WTC11 (cell line): ENCODE measurements at regions of chr5 and their contacts with region 1.

Region 1: GRCh38 chr5:141968914-141969608 is at the start of gene RNF14:
- DNase-seq: peak; percentile 95
- ATAC-seq: peak; percentile 96
- H3K4me3 Mint-ChIP-seq: peak within 1 kb of the TSS; percentile 80
- H3K27ac Mint-ChIP-seq: peak within 1 kb of the TSS; percentile 92
- H3K4me1 Mint-ChIP-seq: peaks cover 19% of the 10 kb centered on the region
- H3K27me3 Mint-ChIP-seq: no peaks in the 10 kb centered on the region
- CTCF ChIP-seq: peak; percentile 98
- total RNA-seq, gene RNF14: 17.0 to 22.6 TPM (median 20.5 TPM) in 3 replicates

Region 2: DNA sequence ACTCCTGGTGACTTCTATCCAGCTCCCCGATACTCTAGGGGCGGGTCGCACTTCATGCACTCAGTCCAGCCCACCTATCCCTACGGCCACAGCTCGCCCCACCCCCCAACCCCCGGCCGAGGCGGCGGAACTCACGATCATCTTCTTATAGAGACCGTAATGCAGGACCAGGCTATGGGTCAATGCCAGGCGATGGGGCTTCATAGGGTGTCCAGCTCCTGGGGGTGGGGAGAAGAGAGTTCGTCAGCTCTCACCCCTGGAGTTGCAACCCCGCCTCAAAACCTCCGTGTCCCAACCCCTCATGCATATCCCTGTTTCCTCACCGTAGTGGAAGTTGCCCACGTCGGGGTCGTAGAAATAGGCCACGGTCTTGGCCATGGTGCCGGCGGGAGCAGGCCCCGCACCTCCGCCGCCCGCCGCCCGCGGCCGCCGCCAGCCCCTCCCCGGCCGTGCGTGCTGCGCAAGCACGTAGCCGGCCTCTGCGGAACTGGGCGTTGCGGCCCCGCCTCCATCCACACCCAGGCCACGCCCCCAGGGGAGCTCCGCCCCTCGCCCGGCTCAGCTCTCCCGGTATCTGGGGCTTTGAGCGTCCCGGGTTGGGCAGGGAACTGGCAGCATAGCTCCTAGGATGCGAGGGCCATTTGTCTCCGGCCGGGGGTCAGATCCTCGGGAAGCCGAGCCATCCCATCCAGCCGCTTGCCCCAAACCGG is 332.5 kb before region 1 on chr5 and contains the starts of genes HDAC3 and RELL2:
- CTCF ChIA-PET with region 1: interaction called, 17 read pairs
- POLR2A ChIA-PET with region 1: no interaction called
- DNase-seq: peak; percentile 97
- ATAC-seq: peak; percentile 82
- H3K4me3 Mint-ChIP-seq: peak within 1 kb of the TSS; percentile 90
- H3K27ac Mint-ChIP-seq: peak within 1 kb of the TSS; percentile 90
- H3K4me1 Mint-ChIP-seq: peaks cover 22% of the 10 kb centered on the region
- H3K27me3 Mint-ChIP-seq: no peaks in the 10 kb centered on the region
- CTCF ChIP-seq: no peak
- total RNA-seq, gene HDAC3: 84.7 to 96.2 TPM (median 94.5 TPM) in 3 replicates
- total RNA-seq, gene RELL2: 19.3 to 23.8 TPM (median 21.4 TPM) in 3 replicates

Region 3: GRCh38 chr5:141672848-141673813 is 295.9 kb before region 1 on chr5:
- CTCF ChIA-PET with region 1: interaction called, 11 read pairs
- POLR2A ChIA-PET with region 1: no interaction called
- DNase-seq: no peak
- ATAC-seq: peak; percentile 2; the same call in 1 of the 2 replicates
- H3K4me3 Mint-ChIP-seq: no peak overlapping the region
- H3K27ac Mint-ChIP-seq: peak overlapping the region; percentile 42
- H3K4me1 Mint-ChIP-seq: peaks cover 32% of the 10 kb centered on the region
- H3K27me3 Mint-ChIP-seq: no peaks in the 10 kb centered on the region
- CTCF ChIP-seq: no peak

Region 4: GRCh38 chr5:141681695-141682641 is 287.1 kb before region 1 on chr5 and contains the start of gene ARAP3:
- CTCF ChIA-PET with region 1: interaction called, 11 read pairs
- POLR2A ChIA-PET with region 1: interaction called, 3 read pairs
- DNase-seq: peak; percentile 76
- ATAC-seq: peak; percentile 50
- H3K4me3 Mint-ChIP-seq: peak within 1 kb of the TSS; percentile 84
- H3K27ac Mint-ChIP-seq: peak within 1 kb of the TSS; percentile 96
- H3K4me1 Mint-ChIP-seq: peaks cover 50% of the 10 kb centered on the region
- H3K27me3 Mint-ChIP-seq: no peaks in the 10 kb centered on the region
- CTCF ChIP-seq: no peak
- total RNA-seq, gene ARAP3: 51.2 to 60.4 TPM (median 53.4 TPM) in 3 replicates

Region 5: DNA sequence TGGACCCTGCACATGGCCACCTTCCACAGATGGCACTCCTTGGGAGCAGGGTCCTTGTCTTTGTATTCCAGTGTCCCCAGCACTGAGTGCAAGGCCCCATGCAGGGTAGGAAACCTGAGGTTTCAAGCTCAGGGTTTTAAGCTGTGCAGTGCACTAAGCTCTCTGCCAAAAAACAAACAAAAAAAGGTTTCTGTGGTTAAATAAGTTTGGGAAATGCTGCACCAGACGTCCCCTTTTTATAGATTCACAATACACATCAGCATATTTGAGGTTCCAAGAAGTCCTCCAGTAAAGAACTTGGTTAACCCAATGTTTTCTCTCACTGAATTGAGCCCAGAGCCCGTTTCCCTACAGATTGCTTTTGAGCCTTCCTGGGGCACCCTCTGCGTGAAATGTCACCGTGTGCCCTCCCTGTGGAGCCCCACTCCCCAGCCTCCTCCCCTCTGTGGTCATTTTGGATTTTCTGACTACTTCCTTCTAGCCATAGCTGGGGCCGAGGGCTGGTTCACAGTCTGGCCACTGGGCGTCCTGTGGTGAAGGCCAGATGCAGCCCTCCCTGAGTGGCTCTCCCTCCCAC is 28.3 kb before region 1 on chr5:
- CTCF ChIA-PET with region 1: interaction called, 14 read pairs
- POLR2A ChIA-PET with region 1: interaction called, 3 read pairs
- DNase-seq: no peak
- ATAC-seq: peak; percentile 24
- H3K4me3 Mint-ChIP-seq: no peak overlapping the region
- H3K27ac Mint-ChIP-seq: peak overlapping the region; percentile 81
- H3K4me1 Mint-ChIP-seq: peaks cover 11% of the 10 kb centered on the region
- H3K27me3 Mint-ChIP-seq: no peaks in the 10 kb centered on the region; the same call in 1 of the 2 replicates
- CTCF ChIP-seq: no peak

Region 6: DNA sequence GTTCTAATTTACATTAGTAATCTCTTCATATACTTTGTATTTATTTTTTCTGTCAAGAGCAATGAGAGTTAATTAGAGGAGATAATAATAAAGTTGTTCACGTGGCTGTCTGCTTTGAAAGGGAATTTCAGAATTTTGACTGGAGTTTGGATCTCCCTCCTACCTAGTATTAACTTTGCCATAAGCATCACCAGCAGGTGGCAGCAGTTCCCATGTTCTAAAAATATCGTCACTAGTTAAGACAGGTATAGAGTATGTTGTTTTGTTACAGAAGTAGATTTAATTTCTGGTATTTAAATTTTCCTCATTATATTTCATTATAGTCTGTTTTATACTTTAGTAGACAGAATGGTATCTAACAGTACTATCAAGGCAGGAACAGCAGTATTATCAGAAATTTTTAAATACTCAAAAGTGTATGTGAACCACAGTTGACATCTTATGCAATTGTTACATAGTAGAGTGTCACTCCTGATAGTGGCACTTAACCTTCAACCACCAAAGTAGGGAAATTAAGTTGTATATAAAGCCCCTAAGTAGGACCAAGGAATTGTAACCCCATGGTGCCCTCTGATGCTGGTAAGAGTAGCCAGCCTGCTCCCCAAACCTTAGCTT is 23.4 kb after region 1 on chr5:
- CTCF ChIA-PET with region 1: interaction called, 17 read pairs
- POLR2A ChIA-PET with region 1: no interaction called
- DNase-seq: peak; percentile 78
- ATAC-seq: peak; percentile 50
- H3K4me3 Mint-ChIP-seq: no peak overlapping the region
- H3K27ac Mint-ChIP-seq: no peak overlapping the region
- H3K4me1 Mint-ChIP-seq: no peaks in the 10 kb centered on the region
- H3K27me3 Mint-ChIP-seq: no peaks in the 10 kb centered on the region
- CTCF ChIP-seq: peak; percentile 62

Region 7: GRCh38 chr5:142108432-142109330 is 139.6 kb after region 1 on chr5 and contains the start of gene NDFIP1:
- CTCF ChIA-PET with region 1: no interaction called
- POLR2A ChIA-PET with region 1: no interaction called
- DNase-seq: peak; percentile 84
- ATAC-seq: peak; percentile 97
- H3K4me3 Mint-ChIP-seq: peak within 1 kb of the TSS; percentile 81
- H3K27ac Mint-ChIP-seq: peak within 1 kb of the TSS; percentile 69
- H3K4me1 Mint-ChIP-seq: peaks cover 24% of the 10 kb centered on the region
- H3K27me3 Mint-ChIP-seq: peaks cover 15% of the 10 kb centered on the region
- CTCF ChIP-seq: no peak
- total RNA-seq, gene NDFIP1: 26.4 to 27.6 TPM (median 26.6 TPM) in 3 replicates

Region 8: GRCh38 chr5:142350021-142350420 is 381.0 kb after region 1 on chr5:
- CTCF ChIA-PET with region 1: no interaction called
- POLR2A ChIA-PET with region 1: no interaction called
- DNase-seq: no peak
- ATAC-seq: no peak
- H3K4me3 Mint-ChIP-seq: no peak overlapping the region
- H3K27ac Mint-ChIP-seq: no peak overlapping the region
- H3K4me1 Mint-ChIP-seq: peaks cover 18% of the 10 kb centered on the region
- H3K27me3 Mint-ChIP-seq: no peaks in the 10 kb centered on the region
- CTCF ChIP-seq: no peak